ENCODE measurements at regions of chr2 and their contacts with region 1.

Region 1: DNA sequence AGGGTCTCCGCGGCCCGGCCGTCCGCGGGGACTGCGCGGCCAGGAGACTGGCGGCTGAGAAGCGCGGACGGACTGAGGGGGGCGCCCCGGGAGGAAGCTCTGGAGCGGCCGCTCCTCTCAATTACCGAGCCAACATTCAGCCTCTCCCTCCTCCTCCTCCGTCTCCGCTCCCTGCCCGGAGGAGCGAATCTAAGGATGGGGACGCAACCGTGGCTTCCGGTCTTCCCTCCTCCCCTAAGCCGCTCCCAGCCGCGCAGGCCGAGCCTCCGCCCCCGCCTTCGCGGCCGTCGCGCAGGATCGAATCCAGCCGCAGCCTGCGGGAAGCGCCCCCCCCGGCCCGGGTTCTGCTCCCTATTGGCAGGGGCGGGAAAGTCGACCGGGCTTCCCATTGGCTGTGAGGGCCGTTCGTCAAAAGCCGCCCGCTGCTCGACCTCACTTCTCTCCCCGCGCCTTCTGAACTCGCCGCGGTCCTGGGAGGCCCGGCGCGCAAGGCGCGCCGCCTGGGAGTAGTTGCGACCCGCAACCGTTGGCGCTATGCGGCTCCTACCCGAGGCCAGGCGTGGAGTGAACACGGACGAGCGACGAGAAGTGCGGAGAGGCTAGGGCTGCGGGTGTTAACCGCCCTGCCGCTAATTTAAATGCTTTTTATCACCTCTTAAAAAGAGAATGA is at the start of gene HNRNPLL:
- DNase-seq: peak; percentile 99
- H3K4me3 ChIP-seq: peak within 1 kb of the TSS; percentile 76 to 99 (median 92)
- H3K27ac ChIP-seq: peak within 1 kb of the TSS; percentile 96 to 100 (median 99)
- H3K4me1 ChIP-seq: peaks cover 22 to 42% (median 39%) of the 10 kb centered on the region in 4 donors
- H3K27me3 ChIP-seq: no peaks in the 10 kb centered on the region
- CTCF ChIP-seq: no peak
- EP300 ChIP-seq: no peak
- POLR2A ChIP-seq: peak; percentile 95
- total RNA-seq, gene HNRNPLL: 50.2 to 61.5 (median 54.0) TPM

Region 2: DNA sequence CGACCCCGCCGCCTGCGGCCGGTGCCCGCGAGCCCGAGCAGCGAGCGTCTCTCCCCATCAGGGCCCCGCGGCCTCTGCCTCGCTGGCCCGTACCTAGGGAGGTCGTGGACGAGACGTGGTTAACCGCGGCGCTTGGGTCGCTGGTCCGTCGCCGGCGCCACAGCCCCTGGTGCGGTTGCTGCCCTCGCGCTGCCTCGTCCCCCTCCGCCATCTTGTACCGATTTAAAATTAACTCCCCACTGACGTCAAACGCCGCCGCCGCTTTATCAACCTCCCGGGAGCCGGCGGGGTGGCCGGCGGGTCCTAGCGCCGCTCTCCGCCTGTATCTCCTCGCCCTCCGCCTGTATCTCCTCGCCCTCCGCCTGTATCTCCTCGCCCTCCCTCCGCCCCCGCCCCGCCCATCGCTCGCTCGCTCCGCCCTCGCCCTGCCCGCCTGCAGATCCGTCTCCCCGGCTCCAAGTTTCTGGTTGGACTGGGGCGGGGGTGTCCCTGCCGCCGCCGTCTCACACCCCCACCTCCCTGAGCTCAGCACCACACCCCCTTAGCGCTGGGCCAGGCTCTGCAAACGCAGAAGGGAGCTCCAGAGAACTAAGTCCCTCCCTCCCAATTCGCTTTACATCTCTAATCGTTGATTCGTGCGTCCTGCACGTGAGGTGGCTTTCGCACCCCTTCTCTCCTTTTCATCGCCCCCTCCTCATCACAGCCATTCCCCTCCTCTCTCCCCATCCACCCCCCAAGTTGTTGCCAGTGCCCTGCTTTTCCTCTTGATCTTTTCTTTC is 225.6 kb before region 1 on chr2 and contains the start of gene ATL2:
- intact Hi-C with region 1: loop called (anchors 10 kb)
- DNase-seq: peak; percentile 98
- H3K4me3 ChIP-seq: peak within 1 kb of the TSS; percentile 86 to 98 (median 96)
- H3K27ac ChIP-seq: peak within 1 kb of the TSS; percentile 97 to 100 (median 100)
- H3K4me1 ChIP-seq: peaks cover 20 to 46% (median 45%) of the 10 kb centered on the region in 4 donors
- H3K27me3 ChIP-seq: no peaks in the 10 kb centered on the region
- CTCF ChIP-seq: no peak
- EP300 ChIP-seq: peak; percentile 12
- POLR2A ChIP-seq: peak; percentile 82
- total RNA-seq, gene ATL2: 159 to 260 (median 231) TPM

Region 3: DNA sequence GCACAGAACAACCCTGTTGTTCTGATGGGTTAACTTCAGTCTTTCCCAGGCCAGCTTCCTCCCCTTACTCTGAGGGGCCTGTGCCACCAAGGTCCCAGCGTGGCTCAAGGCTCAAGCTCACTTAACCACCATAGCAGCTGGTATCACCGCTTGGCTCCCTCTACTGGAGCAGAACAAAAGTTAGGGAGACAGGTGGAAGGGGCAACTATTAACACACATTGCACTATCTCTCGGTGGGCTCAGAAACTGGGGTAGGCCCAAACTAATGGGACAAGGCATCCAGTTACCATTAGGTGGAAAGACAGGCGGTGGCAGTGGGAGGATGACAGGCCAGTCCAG is 137.1 kb before region 1 on chr2:
- intact Hi-C with region 1: loop called (anchors 5 kb)
- DNase-seq: no peak
- H3K4me3 ChIP-seq: no peak overlapping the region
- H3K27ac ChIP-seq: peak overlapping the region; percentile 85 to 95 (median 90)
- H3K4me1 ChIP-seq: peaks cover 0 to 97% (median 85%) of the 10 kb centered on the region in 4 donors
- H3K27me3 ChIP-seq: no peaks in the 10 kb centered on the region
- CTCF ChIP-seq: peak in 2 of 3 experiments; percentile 27 to 37
- EP300 ChIP-seq: no peak
- POLR2A ChIP-seq: no peak

Region 4: GRCh38 chr2:38665854-38666555 is 63.1 kb after region 1 on chr2 and contains the start of gene GALM:
- intact Hi-C with region 1: loop called (anchors 5 kb)
- DNase-seq: peak; percentile 92
- H3K4me3 ChIP-seq: peak within 1 kb of the TSS; percentile 59 to 65 (median 62)
- H3K27ac ChIP-seq: peak within 1 kb of the TSS; percentile 63 to 79 (median 74)
- H3K4me1 ChIP-seq: peaks cover 13 to 37% (median 28%) of the 10 kb centered on the region in 4 donors
- H3K27me3 ChIP-seq: no peaks in the 10 kb centered on the region
- CTCF ChIP-seq: peak in 1 of 3 experiments; percentile 35
- EP300 ChIP-seq: no peak
- POLR2A ChIP-seq: no peak
- total RNA-seq, gene GALM: 8.3 to 14.6 (median 11.6) TPM

Region 5: DNA sequence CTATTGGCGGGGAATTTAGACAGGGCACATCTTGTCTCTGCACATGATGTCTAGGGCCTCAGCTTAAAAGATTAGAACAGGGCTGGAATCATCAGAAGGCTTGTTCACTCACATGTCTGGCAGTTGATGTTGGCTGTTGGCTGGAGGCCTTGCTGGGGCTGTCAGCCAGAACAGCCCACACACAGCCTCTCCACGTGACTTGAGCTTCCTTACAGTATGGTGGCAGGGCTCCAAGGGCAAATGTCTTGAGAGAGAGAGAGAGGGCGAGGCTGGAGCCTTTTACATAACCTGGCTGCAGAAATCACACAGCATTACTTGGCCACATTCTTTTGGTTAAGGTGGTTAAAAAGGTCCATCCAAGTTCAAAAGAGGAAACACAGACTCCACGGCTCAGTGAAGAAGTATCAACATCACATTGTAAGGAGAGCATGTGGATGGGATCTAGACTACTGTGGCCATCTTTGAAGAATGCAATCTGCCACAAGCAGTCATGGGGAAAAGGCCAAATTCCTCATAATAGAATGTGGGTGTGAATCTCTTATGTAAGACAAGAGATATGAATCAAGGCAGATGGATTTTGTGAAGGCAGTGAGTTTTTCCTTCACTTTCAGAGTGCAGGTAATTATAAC is 117.9 kb after region 1 on chr2:
- intact Hi-C with region 1: loop called (anchors 5 kb)
- DNase-seq: peak; percentile 95
- H3K4me3 ChIP-seq: no peak overlapping the region
- H3K27ac ChIP-seq: peak overlapping the region; percentile 65 to 75 (median 72)
- H3K4me1 ChIP-seq: peaks cover 30 to 34% (median 31%) of the 10 kb centered on the region in 4 donors
- H3K27me3 ChIP-seq: no peaks in the 10 kb centered on the region
- CTCF ChIP-seq: no peak
- EP300 ChIP-seq: peak; percentile 56
- POLR2A ChIP-seq: no peak

Region 6: GRCh38 chr2:38734299-38735058 is 131.6 kb after region 1 on chr2:
- intact Hi-C with region 1: loop called (anchors 5 kb)
- DNase-seq: no peak
- H3K4me3 ChIP-seq: no peak overlapping the region
- H3K27ac ChIP-seq: peak overlapping the region in 2 of 4 donors; percentile 27 to 86
- H3K4me1 ChIP-seq: peaks cover 0 to 50% (median 40%) of the 10 kb centered on the region in 4 donors
- H3K27me3 ChIP-seq: no peaks in the 10 kb centered on the region
- CTCF ChIP-seq: no peak
- EP300 ChIP-seq: no peak
- POLR2A ChIP-seq: no peak

Region 7: GRCh38 chr2:39124000-39124745 is 521.3 kb after region 1 on chr2:
- intact Hi-C with region 1: loop called (anchors 10 kb)
- DNase-seq: peak; percentile 96
- H3K4me3 ChIP-seq: peak overlapping the region; percentile 67 to 86 (median 75)
- H3K27ac ChIP-seq: peak overlapping the region; percentile 89 to 96 (median 94)
- H3K4me1 ChIP-seq: peaks cover 26 to 62% (median 59%) of the 10 kb centered on the region in 4 donors
- H3K27me3 ChIP-seq: no peaks in the 10 kb centered on the region
- CTCF ChIP-seq: peak; percentile 47 to 52 (median 51)
- EP300 ChIP-seq: no peak
- POLR2A ChIP-seq: peak; percentile 40

Measured in esophagus muscularis mucosa (tissue), 4 donors.